IMR-90 (cell line): ENCODE measurements at regions of chr7 and their contacts with region 1.

Region 1: DNA sequence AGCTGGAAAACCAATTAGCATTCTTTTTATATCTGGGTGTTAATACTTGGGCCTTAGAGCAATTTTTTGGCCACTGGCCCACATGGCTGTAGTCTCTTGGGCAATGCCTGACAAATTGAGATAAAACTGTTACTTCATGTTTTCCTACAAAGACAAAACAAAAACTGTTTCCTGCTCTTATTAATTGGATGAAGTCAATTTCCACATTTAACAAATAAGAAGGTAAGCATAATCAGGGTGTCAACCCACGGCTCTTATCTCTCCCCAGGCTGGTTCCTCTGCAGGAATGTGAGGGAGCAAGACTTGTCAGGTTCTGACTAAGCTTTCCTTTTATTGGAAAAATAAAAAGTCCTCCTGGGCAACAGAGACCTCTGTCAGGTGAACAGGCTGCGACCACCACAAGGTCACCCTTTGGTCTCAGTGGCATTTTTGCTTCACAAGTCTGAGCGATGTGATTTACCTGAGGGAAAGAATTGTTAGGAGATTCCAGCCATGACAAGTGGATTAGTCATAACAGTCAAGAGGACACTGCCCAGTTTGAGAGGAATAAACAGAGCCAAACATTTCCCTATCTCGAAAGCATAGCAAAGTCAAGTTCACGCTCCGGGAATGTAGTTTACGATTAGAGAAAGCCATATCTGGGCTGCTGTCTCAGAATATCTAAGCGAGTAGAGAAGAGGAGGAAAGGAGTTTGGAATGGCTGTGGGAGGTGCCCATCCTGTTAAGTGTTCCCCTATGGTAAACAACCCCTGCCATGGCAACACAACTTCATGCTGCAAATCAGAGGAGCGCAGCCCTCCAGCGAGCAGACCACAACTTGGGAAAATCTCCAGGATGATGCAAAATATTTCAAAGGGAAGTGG is 144.4 kb downstream of the TES start:
- DNase-seq: peak; percentile 98
- ATAC-seq: peak; percentile 92
- H3K4me3 ChIP-seq: peak overlapping the region; percentile 0; the same call in 1 of the 2 replicates
- H3K27ac ChIP-seq: peak overlapping the region; percentile 69
- H3K4me1 ChIP-seq: peaks cover 24% of the 10 kb centered on the region
- H3K27me3 ChIP-seq: no peaks in the 10 kb centered on the region
- CTCF ChIP-seq: no peak
- POLR2A ChIP-seq: peak; percentile 41; the same call in 1 of the 2 replicates
- RAD21 ChIP-seq: peak; percentile 34

Region 2: DNA sequence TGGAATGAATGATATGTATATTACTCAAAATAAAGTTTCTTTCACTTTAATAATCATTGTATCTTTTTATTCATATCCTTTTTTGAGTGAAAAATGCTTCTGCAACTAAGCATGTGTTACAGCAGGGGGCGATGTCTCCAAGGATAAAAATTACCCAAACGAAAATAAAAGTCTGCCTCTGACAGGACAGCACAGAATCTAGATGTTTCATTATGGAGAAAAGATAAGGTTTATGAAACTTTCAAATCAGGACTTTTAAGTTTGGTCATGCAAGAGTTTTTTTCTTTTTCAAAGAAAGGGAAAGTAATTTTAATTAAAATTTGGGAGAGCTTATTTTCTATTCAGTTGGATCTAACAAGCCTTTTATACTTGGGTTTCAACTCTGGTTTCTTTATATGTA is 96.0 kb before region 1 on chr7:
- CTCF ChIA-PET with region 1: interaction called, 3 read pairs
- POLR2A ChIA-PET with region 1: no interaction called
- dilution Hi-C with region 1: no loop called
- in situ Hi-C with region 1: no loop called
- intact Hi-C with region 1: loop called (anchors 1 kb)
- DNase-seq: peak; percentile 79
- ATAC-seq: peak; percentile 75
- H3K4me3 ChIP-seq: no peak overlapping the region
- H3K27ac ChIP-seq: peak overlapping the region; percentile 49; the same call in 1 of the 2 replicates
- H3K4me1 ChIP-seq: peaks cover 11% of the 10 kb centered on the region; the same call in 1 of the 2 replicates
- H3K27me3 ChIP-seq: no peaks in the 10 kb centered on the region
- CTCF ChIP-seq: peak; percentile 91
- POLR2A ChIP-seq: 0 out of 2 replicates have a peak, but pooled peaks have one; percentile 39
- RAD21 ChIP-seq: peak; percentile 95

Region 3: DNA sequence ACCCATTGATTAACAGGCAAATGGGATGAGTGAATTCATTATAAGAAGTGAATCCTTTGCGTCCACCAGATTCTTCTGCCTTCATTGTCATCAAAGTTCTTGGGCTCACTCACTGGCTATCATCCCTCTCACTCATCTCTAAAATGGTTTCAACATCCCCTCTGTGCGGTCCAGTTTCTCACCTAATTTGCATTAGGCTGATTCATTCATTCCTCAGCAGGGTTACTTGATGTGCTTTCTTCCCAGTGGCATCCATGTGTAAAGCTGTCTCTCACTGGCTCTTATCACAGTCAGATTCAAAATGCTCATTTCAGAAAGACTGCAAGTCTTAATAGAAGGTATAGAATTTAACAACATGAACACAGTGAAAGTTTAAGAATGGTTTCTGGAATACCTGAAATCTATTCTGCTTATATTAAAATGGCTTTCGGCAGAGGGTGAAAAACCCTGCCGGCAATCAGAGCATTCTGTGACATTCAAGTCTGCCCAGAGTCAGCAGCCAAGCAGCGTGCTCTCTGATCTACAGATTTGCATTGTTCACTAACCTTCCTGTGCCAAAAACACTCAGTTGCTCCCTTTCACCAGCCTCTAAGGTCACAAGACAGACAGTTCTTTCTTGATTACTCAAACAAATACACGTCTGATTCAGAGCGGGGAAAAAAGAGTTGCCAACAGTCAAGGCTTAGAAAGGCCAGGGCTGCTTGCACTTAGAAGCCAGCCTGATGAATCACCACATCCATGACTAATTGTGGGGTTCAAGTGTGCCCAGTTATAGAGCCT is 37.8 kb before region 1 on chr7:
- CTCF ChIA-PET with region 1: no interaction called
- POLR2A ChIA-PET with region 1: no interaction called
- dilution Hi-C with region 1: no loop called
- in situ Hi-C with region 1: no loop called
- intact Hi-C with region 1: loop called (anchors 1 kb)
- DNase-seq: peak; percentile 99
- ATAC-seq: peak; percentile 86
- H3K4me3 ChIP-seq: no peak overlapping the region
- H3K27ac ChIP-seq: peak overlapping the region; percentile 62
- H3K4me1 ChIP-seq: peaks cover 11% of the 10 kb centered on the region
- H3K27me3 ChIP-seq: no peaks in the 10 kb centered on the region
- CTCF ChIP-seq: no peak
- POLR2A ChIP-seq: peak; percentile 41; the same call in 1 of the 2 replicates
- RAD21 ChIP-seq: 0 out of 2 replicates have a peak, but pooled peaks have one; percentile 17

Region 4: GRCh38 chr7:116426428-116427156 is 71.8 kb after region 1 on chr7:
- CTCF ChIA-PET with region 1: no interaction called
- POLR2A ChIA-PET with region 1: no interaction called
- dilution Hi-C with region 1: no loop called
- in situ Hi-C with region 1: no loop called
- intact Hi-C with region 1: loop called (anchors 5 kb)
- DNase-seq: peak; percentile 89
- ATAC-seq: peak; percentile 73
- H3K4me3 ChIP-seq: no peak overlapping the region
- H3K27ac ChIP-seq: 0 out of 2 replicates have a peak overlapping the region, but pooled peaks have one; percentile 33
- H3K4me1 ChIP-seq: peaks cover 5% of the 10 kb centered on the region; the same call in 1 of the 2 replicates
- H3K27me3 ChIP-seq: no peaks in the 10 kb centered on the region
- CTCF ChIP-seq: no peak
- POLR2A ChIP-seq: no peak
- RAD21 ChIP-seq: no peak

Region 5: GRCh38 chr7:116499168-116500077 is 144.6 kb after region 1 on chr7 and contains the start of gene CAV2:
- CTCF ChIA-PET with region 1: no interaction called
- POLR2A ChIA-PET with region 1: interaction called, 5 read pairs
- dilution Hi-C with region 1: no loop called
- in situ Hi-C with region 1: no loop called
- intact Hi-C with region 1: loop called (anchors 1 kb)
- DNase-seq: peak; percentile 48
- ATAC-seq: peak; percentile 91
- H3K4me3 ChIP-seq: peak within 1 kb of the TSS; percentile 88
- H3K27ac ChIP-seq: peak within 1 kb of the TSS; percentile 94
- H3K4me1 ChIP-seq: peaks cover 15% of the 10 kb centered on the region
- H3K27me3 ChIP-seq: no peaks in the 10 kb centered on the region
- CTCF ChIP-seq: no peak
- POLR2A ChIP-seq: no peak; the same call in 1 of the 2 replicates
- RAD21 ChIP-seq: no peak
- total RNA-seq, gene CAV2: 199 and 217 TPM in 2 replicates